CD4-positive, alpha-beta memory T cell (primary cell): ENCODE measurements at regions of chr16 and their contacts with region 1.

Region 1: DNA sequence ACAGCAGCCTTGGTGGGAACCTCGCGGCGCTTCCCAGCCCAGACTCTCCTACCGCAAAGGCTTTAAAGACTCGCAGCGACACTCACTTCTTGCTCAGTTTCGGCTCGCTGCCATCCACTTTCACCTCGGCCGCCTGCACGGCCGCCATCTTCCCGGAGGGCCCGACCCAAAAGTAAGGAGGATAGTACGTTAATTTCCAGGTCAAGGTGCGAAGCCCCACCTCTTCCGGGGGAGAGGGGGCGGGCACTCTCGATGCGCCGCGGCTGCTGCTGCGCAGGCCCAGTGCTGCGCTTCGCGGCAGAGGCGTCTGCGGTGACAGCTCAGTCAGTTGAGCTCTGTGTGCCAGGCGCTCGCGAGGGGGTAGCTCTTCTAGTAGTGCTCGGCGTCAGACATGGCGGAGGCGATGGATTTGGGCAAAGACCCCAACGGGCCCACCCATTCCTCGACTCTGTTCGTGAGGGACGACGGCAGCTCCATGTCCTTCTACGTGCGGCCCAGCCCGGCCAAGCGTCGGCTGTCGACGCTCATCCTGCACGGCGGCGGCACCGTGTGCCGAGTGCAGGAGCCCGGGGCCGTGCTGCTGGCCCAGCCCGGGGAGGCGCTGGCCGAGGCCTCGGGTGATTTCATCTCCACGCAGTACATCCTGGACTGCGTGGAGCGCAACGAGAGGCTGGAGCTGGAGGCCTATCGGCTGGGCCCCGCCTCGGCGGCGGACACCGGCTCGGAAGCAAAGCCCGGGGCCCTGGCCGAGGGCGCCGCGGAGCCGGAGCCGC is at the starts of genes KARS1 and TERF2IP:
- DNase-seq: peak; percentile 94 to 96 (median 95)
- H3K4me3 ChIP-seq: peak within 1 kb of the TSS; percentile 79 to 99
- H3K4me3 Mint-ChIP-seq: peak within 1 kb of the TSS; percentile 94 to 100 (median 99)
- H3K27ac ChIP-seq: peak within 1 kb of the TSS; percentile 98
- H3K27ac Mint-ChIP-seq: peak within 1 kb of the TSS; percentile 95 to 99 (median 99)
- H3K4me1 ChIP-seq: peaks cover 71% of the 10 kb centered on the region
- H3K4me1 Mint-ChIP-seq: peaks cover 44 to 73% (median 59%) of the 10 kb centered on the region in 4 donors
- H3K27me3 ChIP-seq: no peaks in the 10 kb centered on the region
- H3K27me3 Mint-ChIP-seq: no peaks in the 10 kb centered on the region
- total RNA-seq, gene KARS1: 120 to 124 TPM
- total RNA-seq, gene TERF2IP: 98.4 to 108 TPM

Region 2: GRCh38 chr16:75148311-75149195 is 499.1 kb before region 1 on chr16 and contains the start of gene ZFP1:
- CTCF ChIA-PET with region 1: no interaction called
- POLR2A ChIA-PET with region 1: no interaction called
- intact Hi-C with region 1: loop called (anchors 2 kb)
- DNase-seq: peak; percentile 92 to 96 (median 93)
- H3K4me3 ChIP-seq: peak within 1 kb of the TSS; percentile 44 to 95
- H3K4me3 Mint-ChIP-seq: peak within 1 kb of the TSS; percentile 82 to 91 (median 88)
- H3K27ac ChIP-seq: peak within 1 kb of the TSS; percentile 75
- H3K27ac Mint-ChIP-seq: peak within 1 kb of the TSS; percentile 75 to 93 (median 91)
- H3K4me1 ChIP-seq: peaks cover 5% of the 10 kb centered on the region
- H3K4me1 Mint-ChIP-seq: peaks cover 8 to 23% (median 13%) of the 10 kb centered on the region in 4 donors
- H3K27me3 ChIP-seq: no peaks in the 10 kb centered on the region
- H3K27me3 Mint-ChIP-seq: no peaks in the 10 kb centered on the region
- total RNA-seq, gene ZFP1: 11.7 to 13.4 TPM

Region 3: GRCh38 chr16:75555707-75556430 is 91.8 kb before region 1 on chr16 and contains the start of gene TMEM231:
- CTCF ChIA-PET with region 1: no interaction called
- POLR2A ChIA-PET with region 1: interaction called, 38 read pairs
- intact Hi-C with region 1: loop called (anchors 1 kb)
- DNase-seq: peak; percentile 94 to 98 (median 96)
- H3K4me3 ChIP-seq: peak within 1 kb of the TSS; percentile 75 to 76
- H3K4me3 Mint-ChIP-seq: peak within 1 kb of the TSS; percentile 87 to 95 (median 90)
- H3K27ac ChIP-seq: peak within 1 kb of the TSS; percentile 68
- H3K27ac Mint-ChIP-seq: peak within 1 kb of the TSS; percentile 89 to 98 (median 95)
- H3K4me1 ChIP-seq: peaks cover 15% of the 10 kb centered on the region
- H3K4me1 Mint-ChIP-seq: peaks cover 3 to 16% (median 10%) of the 10 kb centered on the region in 4 donors
- H3K27me3 ChIP-seq: no peaks in the 10 kb centered on the region
- H3K27me3 Mint-ChIP-seq: peaks cover 0 to 1% of the 10 kb centered on the region in 2 donors
- total RNA-seq, gene TMEM231: 2.4 to 2.6 TPM

Region 4: DNA sequence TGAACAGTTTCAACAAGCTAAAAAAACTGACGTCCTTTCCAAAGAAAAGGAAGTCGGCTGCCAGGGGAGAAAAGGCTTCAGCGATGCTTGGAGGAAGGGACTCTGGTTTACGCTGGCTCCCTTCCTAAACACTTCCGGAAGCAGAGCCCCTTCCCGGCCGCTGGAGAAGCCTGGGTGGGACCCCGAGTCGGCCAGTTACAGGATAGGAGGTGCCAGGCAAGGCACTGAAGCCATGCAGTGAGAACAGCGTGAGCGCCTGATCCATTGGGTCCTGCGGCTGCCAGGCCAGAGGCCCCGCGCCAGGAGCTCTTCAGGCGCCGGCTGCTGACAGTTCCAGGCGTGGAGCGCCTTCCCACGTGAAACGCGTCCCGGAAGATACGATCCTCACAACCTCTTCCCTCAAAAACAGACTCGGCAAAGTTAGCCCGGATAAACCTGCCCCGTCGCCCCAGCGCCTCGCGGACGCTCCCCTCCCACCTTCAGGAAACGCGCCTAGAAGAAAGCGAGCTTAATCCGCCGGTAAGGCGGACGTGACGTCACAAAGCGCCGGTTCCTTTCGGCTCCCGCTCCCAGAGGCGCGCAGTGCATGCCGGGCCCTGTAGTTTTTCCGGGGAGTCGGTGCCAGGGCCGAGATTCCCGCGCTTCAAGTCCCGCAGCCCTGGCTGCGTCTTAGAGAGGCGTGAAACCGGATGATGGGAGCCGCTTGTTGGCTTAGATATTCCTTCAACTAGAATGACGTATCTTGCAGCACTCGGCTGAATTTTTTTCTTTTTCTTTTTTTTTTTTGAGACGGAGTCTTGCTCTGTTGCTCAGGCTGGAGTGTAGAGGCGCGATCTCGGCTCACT is 24.7 kb before region 1 on chr16 and contains the start of gene ADAT1:
- CTCF ChIA-PET with region 1: interaction called, 31 read pairs
- POLR2A ChIA-PET with region 1: interaction called, 293 read pairs
- intact Hi-C with region 1: loop called (anchors 1 kb)
- DNase-seq: peak; percentile 95 to 99 (median 98)
- H3K4me3 ChIP-seq: peak within 1 kb of the TSS; percentile 86 to 90
- H3K4me3 Mint-ChIP-seq: peak within 1 kb of the TSS; percentile 90 to 98 (median 97)
- H3K27ac ChIP-seq: peak within 1 kb of the TSS; percentile 96
- H3K27ac Mint-ChIP-seq: peak within 1 kb of the TSS; percentile 97 to 99 (median 98)
- H3K4me1 ChIP-seq: peaks cover 59% of the 10 kb centered on the region
- H3K4me1 Mint-ChIP-seq: peaks cover 46 to 87% (median 58%) of the 10 kb centered on the region in 4 donors
- H3K27me3 ChIP-seq: no peaks in the 10 kb centered on the region
- H3K27me3 Mint-ChIP-seq: peaks cover 0 to 3% of the 10 kb centered on the region in 2 donors
- total RNA-seq, gene ADAT1: 88.3 to 93.9 TPM

Region 5: GRCh38 chr16:75718452-75718851 is 70.8 kb after region 1 on chr16:
- CTCF ChIA-PET with region 1: no interaction called
- POLR2A ChIA-PET with region 1: no interaction called
- intact Hi-C with region 1: no loop called
- DNase-seq: no peak
- H3K4me3 ChIP-seq: no peak overlapping the region
- H3K4me3 Mint-ChIP-seq: no peak overlapping the region
- H3K27ac ChIP-seq: no peak overlapping the region
- H3K27ac Mint-ChIP-seq: no peak overlapping the region
- H3K4me1 ChIP-seq: no peaks in the 10 kb centered on the region
- H3K4me1 Mint-ChIP-seq: no peaks in the 10 kb centered on the region
- H3K27me3 ChIP-seq: peaks cover 3% of the 10 kb centered on the region
- H3K27me3 Mint-ChIP-seq: peaks cover 6% of the 10 kb centered on the region in 2 donors

Region 6: GRCh38 chr16:75764154-75764768 is 116.6 kb after region 1 on chr16:
- CTCF ChIA-PET with region 1: interaction called, 10 read pairs
- POLR2A ChIA-PET with region 1: interaction called, 6 read pairs
- intact Hi-C with region 1: loop called (anchors 1 kb)
- DNase-seq: peak; percentile 57 to 69 (median 67)
- H3K4me3 ChIP-seq: no peak overlapping the region
- H3K4me3 Mint-ChIP-seq: no peak overlapping the region
- H3K27ac ChIP-seq: no peak overlapping the region
- H3K27ac Mint-ChIP-seq: peak overlapping the region in 1 of 7 donors; percentile 3
- H3K4me1 ChIP-seq: no peaks in the 10 kb centered on the region
- H3K4me1 Mint-ChIP-seq: peaks cover 4 to 8% (median 6%) of the 10 kb centered on the region in 4 donors
- H3K27me3 ChIP-seq: no peaks in the 10 kb centered on the region
- H3K27me3 Mint-ChIP-seq: peaks cover 0 to 2% of the 10 kb centered on the region in 2 donors